ENCODE measurements at regions of chr22 and their contacts with region 1.

Region 1: DNA sequence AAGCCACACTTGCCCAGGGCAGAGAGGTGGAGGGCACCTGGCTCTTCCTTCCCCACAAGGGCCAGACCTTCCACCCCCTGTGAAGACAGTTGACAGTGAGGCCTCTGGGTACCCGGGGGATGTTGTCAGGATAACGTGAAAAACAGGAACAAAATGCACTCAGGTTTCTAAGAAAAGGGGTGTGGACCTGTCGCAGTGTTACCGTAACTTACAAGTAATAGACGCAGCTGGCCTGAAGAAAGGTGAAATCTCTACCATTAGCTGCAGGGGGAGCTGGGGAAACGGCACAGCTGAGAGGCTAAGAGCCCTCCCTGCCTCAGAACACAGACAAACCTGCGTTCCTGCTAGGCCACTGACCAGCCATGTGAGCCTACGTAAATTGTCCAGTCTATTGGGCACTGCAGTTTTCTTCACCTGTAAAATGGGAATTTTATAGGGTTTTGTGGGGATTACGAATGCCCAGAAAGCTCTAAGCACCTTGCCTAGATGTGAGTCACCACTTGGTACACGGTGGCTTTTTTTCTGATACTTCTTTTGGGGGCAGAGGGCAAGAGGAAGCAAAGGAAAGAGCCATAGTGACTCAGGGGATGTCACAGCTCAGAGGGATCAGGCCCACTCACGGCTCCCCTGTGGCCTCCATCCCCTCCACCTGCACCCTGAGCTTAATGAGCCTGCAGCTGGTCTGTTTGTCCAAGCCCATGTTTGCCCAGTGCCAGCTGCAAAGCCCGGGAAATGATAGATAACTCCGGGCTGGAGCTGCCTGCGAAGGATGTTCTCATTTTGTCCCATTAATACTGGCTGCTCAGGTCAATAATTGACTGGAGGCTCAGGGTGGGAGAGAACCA is 18.4 kb upstream of the CABP7 start:
- DNase-seq: peak; percentile 37
- ATAC-seq: peak; percentile 63
- H3K4me3 ChIP-seq: peak overlapping the region in 1 of 3 experiments; percentile 15; a peak in 1 of 6 replicates
- H3K27ac ChIP-seq: no peak overlapping the region
- H3K4me1 ChIP-seq: peaks cover 43% of the 10 kb centered on the region
- H3K27me3 ChIP-seq: peaks cover 0 to 21% of the 10 kb centered on the region in 2 experiments; a peak in 4 of 5 replicates
- CTCF ChIP-seq: peak; percentile 62
- EP300 ChIP-seq: no peak
- POLR2A ChIP-seq: no peak
- RAD21 ChIP-seq: peak; percentile 41; the same call in 1 of the 2 replicates

Region 2: GRCh38 chr22:29758068-29758622 is 56.8 kb after region 1 on chr22:
- CTCF ChIA-PET with region 1: no interaction called
- POLR2A ChIA-PET with region 1: no interaction called
- in situ Hi-C with region 1: no loop called
- intact Hi-C with region 1: no loop called
- DNase-seq: no peak
- ATAC-seq: no peak
- H3K4me3 ChIP-seq: no peak overlapping the region
- H3K27ac ChIP-seq: no peak overlapping the region
- H3K4me1 ChIP-seq: no peaks in the 10 kb centered on the region
- H3K27me3 ChIP-seq: no peaks in the 10 kb centered on the region
- CTCF ChIP-seq: no peak
- EP300 ChIP-seq: no peak
- POLR2A ChIP-seq: no peak
- RAD21 ChIP-seq: no peak

Region 3: DNA sequence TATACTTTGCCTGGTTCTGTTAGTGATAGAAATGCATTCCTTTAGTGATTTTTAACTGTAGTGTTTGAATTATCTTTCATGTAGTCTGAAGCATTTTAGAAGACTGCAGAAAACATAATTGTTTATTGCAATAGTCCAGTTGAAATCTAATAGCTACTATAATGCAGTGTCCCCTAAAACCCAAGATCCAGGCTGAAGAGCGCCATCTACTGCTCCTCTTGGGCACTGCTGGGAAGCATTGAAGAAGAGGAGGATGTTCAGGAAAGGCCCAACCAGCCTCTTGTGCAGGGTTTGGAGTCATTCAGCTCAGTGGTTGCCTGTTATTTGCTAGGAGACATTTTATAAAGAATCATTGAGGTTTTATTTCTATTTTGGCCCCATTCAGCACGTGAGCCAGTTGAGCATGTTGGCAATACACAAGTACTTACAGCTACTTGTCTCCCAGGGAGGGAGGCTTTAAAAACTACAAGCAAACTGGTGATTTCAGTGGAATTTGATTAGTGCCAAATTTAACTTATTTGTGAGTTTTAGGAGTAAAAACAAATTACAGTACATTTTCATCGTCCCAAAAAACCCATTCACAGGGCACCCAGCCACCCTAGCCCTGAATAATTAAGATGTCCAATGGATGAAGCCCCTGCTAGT is 304.0 kb after region 1 on chr22:
- CTCF ChIA-PET with region 1: no interaction called
- POLR2A ChIA-PET with region 1: no interaction called
- in situ Hi-C with region 1: loop called (anchors 5 kb)
- intact Hi-C with region 1: no loop called
- DNase-seq: peak; percentile 66
- ATAC-seq: peak; percentile 82
- H3K4me3 ChIP-seq: no peak overlapping the region
- H3K27ac ChIP-seq: no peak overlapping the region
- H3K4me1 ChIP-seq: no peaks in the 10 kb centered on the region
- H3K27me3 ChIP-seq: no peaks in the 10 kb centered on the region
- CTCF ChIP-seq: peak; percentile 90
- EP300 ChIP-seq: no peak
- POLR2A ChIP-seq: no peak
- RAD21 ChIP-seq: peak; percentile 84

Region 4: GRCh38 chr22:30079952-30080533 is 378.7 kb after region 1 on chr22 and contains the start of gene HORMAD2:
- CTCF ChIA-PET with region 1: no interaction called
- POLR2A ChIA-PET with region 1: no interaction called
- in situ Hi-C with region 1: loop called (anchors 10 kb)
- intact Hi-C with region 1: loop called (anchors 5 kb)
- DNase-seq: no peak
- ATAC-seq: no peak; the same call in 2 of the 3 replicates
- H3K4me3 ChIP-seq: no peak within 1 kb of the TSS
- H3K27ac ChIP-seq: no peak within 1 kb of the TSS
- H3K4me1 ChIP-seq: peaks cover 38% of the 10 kb centered on the region
- H3K27me3 ChIP-seq: peaks cover 0 to 8% of the 10 kb centered on the region in 2 experiments; a peak in 2 of 5 replicates
- CTCF ChIP-seq: no peak
- EP300 ChIP-seq: no peak
- POLR2A ChIP-seq: no peak
- RAD21 ChIP-seq: no peak
- total RNA-seq, gene HORMAD2: not detected in 2 replicates